Activated T-helper 2 cell treated with anti-CD3 and anti-CD28 coated beads, Interferon-gamma antibody, Interleukin-2, Interleukin-4, amounts not matched to agents 10 μg/mL and 5 μg/mL and 100 μg/mL, durations not matched to agents 14 hours and 24 hours and 36 hours (primary cell): ENCODE measurements at regions of chr6 and their contacts with region 1.

Region 1: DNA sequence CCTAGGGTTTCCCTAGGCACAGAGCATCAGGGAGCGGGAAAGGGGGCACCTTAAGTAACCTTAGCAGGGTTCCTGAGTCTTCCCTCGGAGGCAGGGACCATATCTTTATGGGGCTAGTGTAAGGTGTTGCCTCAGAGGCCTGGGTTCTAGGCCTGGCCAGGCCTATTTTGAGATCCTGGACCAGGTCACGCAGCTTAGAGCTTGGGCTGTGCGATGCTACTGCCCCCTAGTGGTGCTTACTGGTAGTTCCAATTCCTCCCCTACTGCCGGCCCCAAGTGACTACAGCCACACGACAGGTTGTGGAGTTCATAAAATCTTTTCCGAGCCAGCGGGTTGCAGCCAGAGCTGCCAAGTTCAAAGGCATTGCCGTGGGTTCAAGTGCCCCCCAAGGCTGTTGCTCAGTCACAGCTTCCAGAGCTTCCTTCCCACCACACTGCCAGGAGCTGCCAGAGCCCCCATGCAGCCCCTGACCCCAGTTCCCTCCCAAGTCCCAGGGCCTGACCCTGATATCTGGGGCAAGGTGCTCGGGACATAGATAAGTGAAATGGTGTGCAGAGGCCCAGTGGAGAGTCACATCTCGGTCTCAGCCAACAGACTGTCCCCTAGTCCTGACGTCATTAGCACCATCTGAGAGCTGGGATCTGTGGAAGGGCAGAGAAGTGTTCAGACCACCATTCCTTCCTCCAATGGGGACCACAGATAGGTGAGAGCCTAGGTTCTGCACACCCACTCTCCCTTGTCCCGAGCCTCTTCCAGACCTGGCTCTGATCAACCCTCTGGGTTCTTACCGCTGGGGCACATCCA is 3.3 kb downstream of the LRRC73 start:
- DNase-seq: peak; percentile 74
- H3K4me3 Mint-ChIP-seq: no peak overlapping the region
- H3K27ac Mint-ChIP-seq: no peak overlapping the region
- H3K4me1 Mint-ChIP-seq: peaks cover 10% of the 10 kb centered on the region
- H3K27me3 Mint-ChIP-seq: peaks cover 17% of the 10 kb centered on the region

Region 2: DNA sequence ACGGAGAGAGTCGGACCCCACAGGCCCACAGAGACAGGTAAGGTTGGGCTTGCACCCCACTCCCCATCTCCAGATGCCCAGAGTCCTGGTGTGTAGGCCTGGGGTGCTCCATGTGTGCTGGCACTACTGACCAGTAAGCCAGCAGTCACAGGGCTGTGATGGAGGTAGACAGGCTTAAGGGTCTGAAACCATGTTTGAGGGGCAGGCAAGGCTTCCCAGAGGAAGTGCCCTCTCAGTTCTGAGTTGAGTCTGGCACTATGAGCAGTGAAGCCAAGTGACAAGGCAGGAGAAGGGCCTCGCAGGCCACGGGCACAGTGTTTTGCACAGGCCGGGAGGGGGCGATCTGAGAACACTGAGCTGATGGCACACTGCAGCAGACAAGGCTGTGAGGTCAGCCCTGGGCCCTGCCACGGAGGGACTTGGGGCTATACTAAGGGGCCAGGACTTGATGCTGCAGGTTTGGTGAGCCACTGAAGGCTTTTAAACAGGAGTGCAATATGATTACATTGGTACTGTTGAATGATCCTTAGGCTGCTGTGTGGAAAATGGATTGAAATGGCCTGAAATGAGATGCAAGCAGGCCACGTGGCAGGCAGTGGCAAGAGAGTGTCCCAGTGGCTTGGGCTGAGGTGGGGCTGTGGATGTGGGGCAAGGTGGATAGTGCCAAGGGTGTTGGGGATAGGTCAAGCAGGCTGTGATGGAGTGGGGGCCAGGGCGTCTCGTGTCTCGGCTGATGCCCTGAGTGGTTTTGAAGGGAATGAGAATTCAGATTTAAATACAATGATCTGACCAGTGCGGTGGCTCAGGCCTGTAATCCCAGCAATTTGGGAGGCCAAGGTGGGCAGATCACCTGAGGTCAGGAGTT is 243.3 kb before region 1 on chr6:
- intact Hi-C with region 1: loop called (anchors 1 kb)
- DNase-seq: peak; percentile 60
- H3K4me3 Mint-ChIP-seq: no peak overlapping the region
- H3K27ac Mint-ChIP-seq: no peak overlapping the region
- H3K4me1 Mint-ChIP-seq: no peaks in the 10 kb centered on the region
- H3K27me3 Mint-ChIP-seq: peaks cover 4% of the 10 kb centered on the region

Region 3: GRCh38 chr6:43454696-43455530 is 52.0 kb before region 1 on chr6:
- intact Hi-C with region 1: loop called (anchors 1 kb)
- DNase-seq: no peak
- H3K4me3 Mint-ChIP-seq: peak overlapping the region; percentile 72
- H3K27ac Mint-ChIP-seq: no peak overlapping the region
- H3K4me1 Mint-ChIP-seq: peaks cover 7% of the 10 kb centered on the region
- H3K27me3 Mint-ChIP-seq: peaks cover 24% of the 10 kb centered on the region